ENCODE measurements at regions of chr7 and their contacts with region 1.

Region 1: GRCh38 chr7:30173058-30173897 is 38.5 kb downstream of the MTURN start:
- DNase-seq: peak; percentile 84

Region 2: GRCh38 chr7:30252885-30253795 is 79.9 kb after region 1 on chr7:
- intact Hi-C with region 1: loop called (anchors 5 kb)
- DNase-seq: no peak

Measured in cardiac septum (tissue), 1 donor.